ENCODE measurements at regions of chr2 and their contacts with region 1.

Region 1: DNA sequence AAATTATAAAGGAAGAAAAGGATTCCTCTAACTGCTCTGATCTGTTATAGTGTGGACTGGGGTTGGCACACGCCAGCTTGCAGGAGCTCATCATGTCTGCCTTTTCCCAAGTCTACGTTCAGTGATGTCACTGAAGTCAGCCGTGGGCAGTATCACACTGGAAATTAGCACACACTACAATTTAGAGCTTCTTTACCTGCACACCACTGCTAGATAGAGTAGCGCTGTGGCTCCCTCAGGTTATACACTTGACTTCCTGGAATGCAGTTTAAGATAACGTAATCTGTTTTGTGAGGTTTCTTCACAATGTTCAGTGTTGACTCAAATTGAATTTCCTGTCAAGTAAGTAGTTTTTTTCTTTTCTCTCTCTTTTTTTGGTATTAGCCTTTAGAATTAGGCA is 487.2 kb downstream of the DCDC2C start:
- DNase-seq: no peak
- H3K4me3 ChIP-seq: no peak overlapping the region
- H3K27ac ChIP-seq: no peak overlapping the region
- H3K4me1 ChIP-seq: no peaks in the 10 kb centered on the region
- CTCF ChIP-seq: no peak

Region 2: GRCh38 chr2:5236249-5236648 is 1045.7 kb after region 1 on chr2:
- CTCF ChIA-PET with region 1: no interaction called
- POLR2A ChIA-PET with region 1: no interaction called
- intact Hi-C with region 1: loop called (anchors 5 kb)
- DNase-seq: no peak
- H3K4me3 ChIP-seq: no peak overlapping the region
- H3K27ac ChIP-seq: no peak overlapping the region
- H3K4me1 ChIP-seq: no peaks in the 10 kb centered on the region
- CTCF ChIP-seq: 0 out of 2 replicates have a peak, but pooled peaks have one; percentile 23

Measured in OCI-LY7 (cell line).